ENCODE measurements at regions of chr6 and their contacts with region 1.

Region 1: GRCh38 chr6:159110013-159110412 is 59.2 kb upstream of the FNDC1 start:
- DNase-seq: peak; percentile 57
- ATAC-seq: peak; percentile 65
- H3K4me3 ChIP-seq: no peak overlapping the region
- H3K27ac ChIP-seq: no peak overlapping the region
- H3K4me1 ChIP-seq: peaks cover 3 to 30% of the 10 kb centered on the region in 2 experiments; a peak in 3 of 4 replicates
- H3K27me3 ChIP-seq: no peaks in the 10 kb centered on the region
- CTCF ChIP-seq: peak; percentile 65 to 86 (median 85); a peak in 5 of 6 replicates
- POLR2A ChIP-seq: no peak
- RAD21 ChIP-seq: peak; percentile 77

Region 2: DNA sequence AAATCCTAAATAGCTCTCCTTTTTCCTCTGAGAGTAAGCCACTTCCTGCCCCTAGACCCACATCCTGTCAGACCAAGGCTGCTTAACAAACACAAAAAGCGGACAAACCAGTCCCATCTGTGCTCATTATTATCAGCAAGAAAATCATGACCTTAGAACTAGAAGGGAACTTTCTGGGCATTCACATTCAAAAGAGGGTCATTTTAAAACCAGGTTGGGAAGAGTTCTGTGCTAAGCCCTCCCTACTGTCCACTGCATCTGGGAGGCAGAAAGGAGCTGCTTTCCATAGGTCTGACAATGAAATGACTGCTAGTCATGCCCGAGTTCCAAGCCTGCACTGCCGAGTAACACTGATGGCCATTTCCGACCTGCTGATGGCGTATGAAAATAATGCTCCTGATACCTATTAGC is 306.3 kb before region 1 on chr6:
- CTCF ChIA-PET with region 1: no interaction called
- POLR2A ChIA-PET with region 1: no interaction called
- RAD21 ChIA-PET with region 1: no interaction called
- intact Hi-C with region 1: loop called (anchors 10 kb)
- DNase-seq: no peak
- ATAC-seq: peak; percentile 13; the same call in 1 of the 2 replicates
- H3K4me3 ChIP-seq: no peak overlapping the region
- H3K27ac ChIP-seq: peak overlapping the region; percentile 38
- H3K4me1 ChIP-seq: peaks cover 92 to 96% of the 10 kb centered on the region in 2 experiments
- H3K27me3 ChIP-seq: no peaks in the 10 kb centered on the region
- CTCF ChIP-seq: no peak
- POLR2A ChIP-seq: no peak
- RAD21 ChIP-seq: no peak

Region 3: GRCh38 chr6:159008656-159009288 is 101.2 kb before region 1 on chr6:
- CTCF ChIA-PET with region 1: interaction called, 13 read pairs
- POLR2A ChIA-PET with region 1: no interaction called
- RAD21 ChIA-PET with region 1: no interaction called
- intact Hi-C with region 1: loop called (anchors 2 kb)
- DNase-seq: no peak
- ATAC-seq: peak; percentile 81
- H3K4me3 ChIP-seq: no peak overlapping the region
- H3K27ac ChIP-seq: no peak overlapping the region
- H3K4me1 ChIP-seq: peaks cover 0 to 6% of the 10 kb centered on the region in 2 experiments; a peak in 1 of 4 replicates
- H3K27me3 ChIP-seq: no peaks in the 10 kb centered on the region
- CTCF ChIP-seq: peak in 2 of 3 experiments; percentile 39 to 53; a peak in 4 of 6 replicates
- POLR2A ChIP-seq: no peak
- RAD21 ChIP-seq: no peak

Region 4: GRCh38 chr6:159042003-159042825 is 67.8 kb before region 1 on chr6:
- CTCF ChIA-PET with region 1: interaction called, 15 read pairs
- POLR2A ChIA-PET with region 1: interaction called, 4 read pairs
- RAD21 ChIA-PET with region 1: no interaction called
- intact Hi-C with region 1: no loop called
- DNase-seq: peak; percentile 68
- ATAC-seq: peak; percentile 99
- H3K4me3 ChIP-seq: 0 out of 4 replicates have a peak overlapping the region, but pooled peaks of 1 of the 2 experiments have one; percentile 10
- H3K27ac ChIP-seq: no peak overlapping the region
- H3K4me1 ChIP-seq: peaks cover 0 to 11% of the 10 kb centered on the region in 2 experiments; a peak in 2 of 4 replicates
- H3K27me3 ChIP-seq: no peaks in the 10 kb centered on the region
- CTCF ChIP-seq: peak; percentile 86 to 99 (median 98)
- POLR2A ChIP-seq: no peak
- RAD21 ChIP-seq: peak; percentile 82

Region 5: DNA sequence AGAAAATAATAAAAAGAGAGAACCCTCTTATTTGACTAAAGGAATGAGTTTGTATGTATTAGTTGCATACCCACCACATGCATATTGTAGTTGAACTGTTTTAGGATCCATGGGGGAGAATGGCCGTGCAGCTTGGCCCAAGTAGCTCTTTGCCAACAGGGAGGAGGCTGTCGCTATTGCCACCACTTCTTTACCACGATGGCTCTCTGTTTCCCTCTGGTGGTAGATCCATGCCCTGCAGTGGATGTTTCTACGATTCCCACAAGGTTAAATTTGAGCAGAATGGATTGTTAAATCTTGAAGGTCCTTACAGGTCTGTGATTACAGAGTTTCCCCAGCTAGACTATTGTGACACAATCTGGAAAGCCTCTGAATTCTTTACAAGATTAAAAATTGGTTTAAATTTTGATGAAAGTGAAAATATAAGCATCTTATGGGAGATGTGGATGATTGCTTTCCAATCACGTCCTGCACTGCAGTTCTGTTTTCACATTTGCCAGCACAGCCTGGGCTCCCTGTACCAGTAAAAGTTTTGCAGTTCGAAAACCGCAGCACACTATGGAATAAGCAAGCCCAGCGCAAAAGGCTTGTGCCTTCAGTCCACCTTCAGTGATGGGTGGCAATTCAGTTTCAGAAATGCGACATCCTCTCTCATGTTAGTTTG is 24.8 kb after region 1 on chr6:
- CTCF ChIA-PET with region 1: interaction called, 11 read pairs
- POLR2A ChIA-PET with region 1: no interaction called
- RAD21 ChIA-PET with region 1: interaction called in 1 of 2 experiments, 3 read pairs
- intact Hi-C with region 1: no loop called
- DNase-seq: peak; percentile 75
- ATAC-seq: peak; percentile 91
- H3K4me3 ChIP-seq: peak overlapping the region in 1 of 2 experiments; percentile 20; a peak in 2 of 4 replicates
- H3K27ac ChIP-seq: no peak overlapping the region
- H3K4me1 ChIP-seq: peaks cover 0 to 12% of the 10 kb centered on the region in 2 experiments; a peak in 2 of 4 replicates
- H3K27me3 ChIP-seq: no peaks in the 10 kb centered on the region
- CTCF ChIP-seq: peak; percentile 93 to 99 (median 99)
- POLR2A ChIP-seq: no peak
- RAD21 ChIP-seq: peak; percentile 98

Region 6: GRCh38 chr6:159252955-159253508 is 143.0 kb after region 1 on chr6:
- CTCF ChIA-PET with region 1: no interaction called
- POLR2A ChIA-PET with region 1: no interaction called
- RAD21 ChIA-PET with region 1: no interaction called
- intact Hi-C with region 1: no loop called
- DNase-seq: peak; percentile 33
- ATAC-seq: peak; percentile 94
- H3K4me3 ChIP-seq: no peak overlapping the region
- H3K27ac ChIP-seq: no peak overlapping the region
- H3K4me1 ChIP-seq: 0 out of 4 replicates have a peak, but pooled peaks cover 0 to 3% of the 10 kb centered on the region in 2 experiments
- H3K27me3 ChIP-seq: 0 out of 2 replicates have a peak, but pooled peaks cover 6% of the 10 kb centered on the region
- CTCF ChIP-seq: peak; percentile 36 to 69 (median 66); a peak in 5 of 6 replicates
- POLR2A ChIP-seq: no peak
- RAD21 ChIP-seq: peak; percentile 37; the same call in 1 of the 2 replicates

Measured in HCT116 (cell line).